ENCODE measurements at regions of chr2 and their contacts with region 1.

Region 1: DNA sequence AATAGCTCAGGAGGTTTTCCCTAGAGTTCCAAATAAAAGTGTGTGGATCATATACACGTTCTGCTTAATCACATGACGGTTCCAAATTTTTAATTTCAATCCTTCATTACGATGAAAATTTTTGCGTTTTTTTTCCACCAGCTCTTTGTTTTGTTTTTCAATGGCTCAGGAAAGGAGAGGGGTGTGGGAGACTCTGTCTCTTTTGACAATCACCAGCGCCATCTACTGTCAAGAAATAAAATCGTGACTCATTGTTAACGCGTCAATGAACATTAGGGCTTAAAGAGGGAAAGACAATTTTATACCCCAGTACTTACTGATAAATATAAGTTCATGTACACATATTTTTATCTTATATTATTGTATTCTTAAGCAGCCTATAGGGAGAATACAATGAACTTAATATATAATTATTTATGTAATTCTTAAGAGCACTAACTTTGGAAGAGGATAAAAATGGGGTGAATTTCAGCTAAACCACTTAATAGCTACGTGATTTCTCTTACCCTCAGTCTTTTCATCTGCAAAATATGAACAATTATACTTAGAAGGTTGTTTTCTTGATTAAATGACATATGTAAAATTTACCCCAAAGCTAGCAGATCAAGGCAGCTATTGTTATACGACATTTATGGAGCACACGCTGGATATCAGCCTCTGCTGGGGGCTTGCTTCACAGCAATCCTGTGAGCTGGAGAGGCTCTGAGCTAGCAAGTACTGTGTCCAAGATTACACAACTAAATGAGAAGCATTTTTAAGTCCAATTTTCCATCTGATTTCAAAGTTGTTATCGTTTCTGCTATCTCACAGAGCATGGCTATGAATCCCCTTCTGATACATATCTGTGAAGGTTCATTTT is 47.4 kb upstream of the RMDN2 start:
- DNase-seq: peak; percentile 46
- H3K4me3 ChIP-seq: no peak overlapping the region
- H3K27ac ChIP-seq: no peak overlapping the region
- H3K4me1 ChIP-seq: peaks cover 3% of the 10 kb centered on the region
- H3K27me3 ChIP-seq: no peaks in the 10 kb centered on the region
- CTCF ChIP-seq: peak; percentile 38 to 64

Region 2: DNA sequence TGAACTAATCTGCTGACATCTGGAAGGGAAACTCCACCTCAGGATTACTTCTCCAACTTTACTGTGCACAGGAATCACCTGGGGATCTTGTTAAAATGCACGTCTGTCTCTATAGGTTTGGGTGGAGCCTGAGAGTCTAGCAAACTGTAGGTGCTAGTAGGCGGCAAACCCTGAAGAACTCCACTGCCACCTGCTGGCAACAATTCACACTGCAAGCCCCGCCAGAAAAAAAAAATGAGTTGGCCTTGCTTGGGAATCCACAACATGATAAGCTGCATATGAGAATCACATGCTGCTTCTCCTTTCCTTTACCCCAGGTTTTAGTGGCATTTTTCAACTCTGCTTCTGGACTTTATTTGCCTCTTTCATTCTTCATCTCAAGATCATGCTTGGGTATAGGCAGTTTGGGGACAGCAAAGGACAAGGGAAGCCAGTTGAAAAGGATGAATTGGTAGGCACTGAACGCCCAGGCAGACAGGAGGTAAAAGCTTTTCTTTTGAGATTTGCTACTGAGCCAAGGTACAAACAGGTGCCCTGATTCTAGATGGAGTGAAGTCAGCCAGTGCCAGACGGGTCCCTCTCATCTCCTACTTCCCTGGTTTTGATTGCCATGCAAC is 1092.4 kb before region 1 on chr2:
- CTCF ChIA-PET with region 1: no interaction called
- dilution Hi-C with region 1: no loop called
- in situ Hi-C with region 1: no loop called
- intact Hi-C with region 1: loop called (anchors 10 kb)
- DNase-seq: peak; percentile 66
- H3K4me3 ChIP-seq: no peak overlapping the region
- H3K27ac ChIP-seq: no peak overlapping the region
- H3K4me1 ChIP-seq: no peaks in the 10 kb centered on the region
- H3K27me3 ChIP-seq: no peaks in the 10 kb centered on the region
- CTCF ChIP-seq: peak; percentile 96

Region 3: DNA sequence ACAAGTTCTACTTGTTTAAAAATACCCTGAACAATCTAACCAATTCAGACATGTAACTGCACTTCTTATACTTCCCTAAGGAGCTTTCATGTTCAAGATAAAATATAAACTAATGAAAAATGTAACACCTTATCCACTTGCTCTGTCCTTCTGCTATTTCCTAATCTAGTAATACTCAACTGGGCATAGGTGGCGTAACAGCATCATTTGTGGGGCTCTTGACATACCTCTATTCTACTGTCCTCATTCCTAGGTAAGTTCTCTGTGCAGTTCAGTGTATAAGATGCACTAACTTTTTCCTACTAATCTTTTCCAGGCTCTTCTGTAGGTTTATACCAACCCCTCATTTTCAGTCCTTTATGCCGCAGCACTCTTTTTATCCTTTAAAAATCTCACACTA is 589.7 kb before region 1 on chr2:
- CTCF ChIA-PET with region 1: no interaction called
- dilution Hi-C with region 1: no loop called
- in situ Hi-C with region 1: no loop called
- intact Hi-C with region 1: loop called (anchors 2 kb)
- DNase-seq: no peak
- H3K4me3 ChIP-seq: no peak overlapping the region
- H3K27ac ChIP-seq: no peak overlapping the region
- H3K4me1 ChIP-seq: no peaks in the 10 kb centered on the region
- H3K27me3 ChIP-seq: no peaks in the 10 kb centered on the region
- CTCF ChIP-seq: peak; percentile 33 to 41

Region 4: GRCh38 chr2:37537316-37537715 is 340.4 kb before region 1 on chr2:
- CTCF ChIA-PET with region 1: no interaction called
- dilution Hi-C with region 1: no loop called
- in situ Hi-C with region 1: no loop called
- intact Hi-C with region 1: loop called (anchors 1 kb)
- DNase-seq: no peak
- H3K4me3 ChIP-seq: no peak overlapping the region
- H3K27ac ChIP-seq: no peak overlapping the region
- H3K4me1 ChIP-seq: no peaks in the 10 kb centered on the region
- H3K27me3 ChIP-seq: no peaks in the 10 kb centered on the region
- CTCF ChIP-seq: no peak

Region 5: DNA sequence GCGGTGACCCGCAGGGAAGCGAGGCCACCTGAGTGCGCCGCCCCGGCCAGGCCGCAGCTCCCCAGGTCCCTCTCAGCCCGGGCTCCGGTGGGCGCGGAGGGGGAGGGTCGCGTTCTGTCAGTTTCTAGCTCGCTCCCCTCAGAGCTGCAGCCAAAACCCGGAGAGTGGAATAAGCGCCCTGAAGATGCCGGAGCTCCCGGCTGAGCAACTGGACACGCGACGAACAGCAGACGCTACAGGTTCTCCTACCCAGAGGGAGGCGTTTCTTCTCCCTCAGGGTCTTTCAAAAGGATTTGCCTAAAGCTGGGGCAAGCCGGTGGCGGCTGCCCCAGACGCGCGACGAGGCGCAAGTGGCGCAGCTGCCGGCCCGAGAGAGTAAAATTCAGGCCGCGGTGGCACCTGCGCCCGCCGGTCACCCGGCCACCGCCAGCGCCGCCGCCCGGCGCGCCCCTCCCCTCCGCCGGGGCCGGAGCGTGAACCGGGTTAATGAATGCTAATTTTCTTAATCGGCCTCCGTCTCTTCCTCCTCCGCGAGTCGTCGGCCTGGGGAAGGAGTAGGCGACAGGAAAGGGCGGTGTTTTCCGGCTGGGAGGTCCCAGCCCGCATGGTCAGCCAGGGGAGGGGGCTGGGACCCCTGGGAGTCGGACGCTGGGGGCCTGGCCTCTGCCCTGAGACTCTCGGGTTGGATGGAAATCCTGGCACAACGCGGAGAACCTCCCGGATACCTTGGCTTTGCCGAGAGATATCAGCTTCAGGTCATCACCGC is 205.4 kb before region 1 on chr2:
- CTCF ChIA-PET with region 1: no interaction called
- dilution Hi-C with region 1: no loop called
- in situ Hi-C with region 1: no loop called
- intact Hi-C with region 1: loop called (anchors 1 kb)
- DNase-seq: peak; percentile 90
- H3K4me3 ChIP-seq: peak overlapping the region; percentile 88 to 96 (median 93)
- H3K27ac ChIP-seq: peak overlapping the region; percentile 65
- H3K4me1 ChIP-seq: peaks cover 44% of the 10 kb centered on the region
- H3K27me3 ChIP-seq: no peaks in the 10 kb centered on the region
- CTCF ChIP-seq: no peak

Region 6: GRCh38 chr2:37832590-37833197 is 45.0 kb before region 1 on chr2:
- CTCF ChIA-PET with region 1: interaction called, 8 read pairs
- dilution Hi-C with region 1: no loop called
- in situ Hi-C with region 1: no loop called
- intact Hi-C with region 1: loop called (anchors 1 kb)
- DNase-seq: peak; percentile 73
- H3K4me3 ChIP-seq: no peak overlapping the region
- H3K27ac ChIP-seq: no peak overlapping the region
- H3K4me1 ChIP-seq: no peaks in the 10 kb centered on the region
- H3K27me3 ChIP-seq: no peaks in the 10 kb centered on the region
- CTCF ChIP-seq: peak; percentile 75 to 87

Measured in mammary epithelial cell (primary cell).